ENCODE measurements at regions of chr15 and their contacts with region 1.

Region 1: DNA sequence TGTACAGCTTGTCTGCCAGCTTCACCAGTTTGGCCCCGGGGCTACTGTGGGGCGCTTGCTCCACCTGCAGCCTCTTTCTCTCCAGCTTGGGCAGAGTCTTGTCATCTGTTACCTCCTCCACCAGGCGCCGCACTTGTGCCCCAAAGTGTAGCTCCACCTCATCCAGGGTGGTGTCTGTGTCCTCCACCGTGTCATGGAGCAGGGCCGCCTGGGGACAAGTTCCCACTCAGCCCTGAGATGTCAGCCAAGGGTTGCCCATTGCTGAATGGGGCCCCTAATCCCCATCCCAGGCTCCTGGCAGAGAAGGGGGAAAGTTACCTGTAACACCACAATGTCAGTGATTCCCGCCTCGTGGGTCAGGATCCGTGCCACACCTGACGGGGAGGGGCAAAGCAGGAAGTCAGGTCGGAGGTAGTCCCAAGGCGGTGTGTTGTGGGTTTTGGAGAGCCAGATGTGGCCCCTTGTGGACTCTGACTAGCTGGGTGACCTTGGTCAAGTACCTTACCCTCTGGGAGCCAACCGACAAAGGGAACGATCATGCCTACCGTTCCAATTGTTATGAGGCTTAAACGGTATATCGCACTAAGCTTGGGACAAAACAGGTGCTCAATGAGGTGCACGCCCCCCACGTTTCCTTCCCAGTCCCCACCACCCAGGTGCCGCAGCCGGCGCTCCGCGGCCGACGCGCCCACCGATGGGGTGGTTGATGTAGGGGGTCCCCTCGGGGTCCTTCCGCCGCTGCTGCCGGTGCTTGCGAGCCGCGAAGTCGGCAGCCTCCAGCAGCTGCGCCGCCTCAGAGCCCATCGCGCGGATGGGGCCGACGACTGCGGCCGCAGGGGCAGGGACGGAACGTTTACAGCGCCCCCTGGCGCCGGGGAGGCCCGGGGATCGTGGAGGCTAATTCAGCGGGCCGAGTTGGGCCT is at the start of gene HDDC3:
- DNase-seq: peak; percentile 80 to 98 (median 88)
- ATAC-seq: peak; percentile 72
- H3K4me3 ChIP-seq: peak within 1 kb of the TSS; percentile 97
- H3K4me3 Mint-ChIP-seq: peak within 1 kb of the TSS; percentile 96 to 100 (median 98)
- H3K27ac ChIP-seq: peak within 1 kb of the TSS; percentile 79
- H3K27ac Mint-ChIP-seq: peak within 1 kb of the TSS; percentile 91 to 99 (median 98)
- H3K4me1 ChIP-seq: peaks cover 33 to 50% of the 10 kb centered on the region in 2 donors
- H3K4me1 Mint-ChIP-seq: peaks cover 36 to 63% (median 53%) of the 10 kb centered on the region in 7 donors
- H3K27me3 ChIP-seq: no peaks in the 10 kb centered on the region
- H3K27me3 Mint-ChIP-seq: no peaks in the 10 kb centered on the region
- total RNA-seq, gene HDDC3: 13.3 to 34.2 (median 29.0) TPM

Region 2: DNA sequence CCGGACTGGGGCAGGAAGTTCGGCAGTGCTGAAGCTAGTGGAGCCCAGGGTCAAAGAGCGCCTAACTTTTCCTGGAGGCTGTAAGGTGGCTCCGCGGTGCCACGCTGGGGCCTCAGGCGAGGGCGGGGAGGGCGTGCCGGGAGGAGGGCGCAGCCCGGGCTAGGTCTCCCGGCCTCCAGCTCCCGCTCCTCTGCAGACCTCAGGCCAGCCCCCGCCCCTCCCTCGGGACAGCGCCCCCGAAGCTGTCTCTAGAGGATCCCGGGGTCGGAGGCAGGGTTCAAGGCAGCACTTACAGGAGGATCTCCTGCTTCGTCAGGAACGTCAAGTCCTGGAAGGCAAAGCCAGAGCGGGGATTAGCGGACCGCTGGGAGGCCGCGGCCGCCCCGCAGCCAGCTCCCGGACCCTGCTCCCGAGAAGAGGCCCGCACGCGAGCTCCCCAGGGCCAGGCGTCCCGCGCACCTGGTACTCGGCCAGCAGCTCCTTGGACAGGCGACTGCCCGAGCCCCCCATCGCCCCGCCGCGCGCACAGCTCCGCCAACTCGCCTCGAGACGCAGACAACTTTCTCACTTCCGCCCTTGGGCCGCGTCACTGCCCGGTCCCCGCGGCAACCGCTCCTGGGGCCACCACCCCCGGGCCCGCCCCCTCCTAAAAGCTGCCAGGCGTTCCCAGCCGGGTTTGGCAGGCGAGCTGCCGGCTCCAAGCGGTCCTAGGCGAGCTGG is 698.5 kb before region 1 on chr15 and contains the start of gene CIB1:
- CTCF ChIA-PET with region 1: no interaction called
- POLR2A ChIA-PET with region 1: interaction called, 5 read pairs
- intact Hi-C with region 1: loop called (anchors 1 kb)
- DNase-seq: peak in 7 of 9 donors; percentile 91 to 97 (median 95)
- ATAC-seq: peak; percentile 89
- H3K4me3 ChIP-seq: peak within 1 kb of the TSS; percentile 92
- H3K4me3 Mint-ChIP-seq: peak within 1 kb of the TSS; percentile 87 to 95 (median 92)
- H3K27ac ChIP-seq: peak within 1 kb of the TSS; percentile 99
- H3K27ac Mint-ChIP-seq: peak within 1 kb of the TSS; percentile 96 to 100 (median 98)
- H3K4me1 ChIP-seq: peaks cover 39 to 43% of the 10 kb centered on the region in 2 donors
- H3K4me1 Mint-ChIP-seq: peaks cover 40 to 67% (median 57%) of the 10 kb centered on the region in 7 donors
- H3K27me3 ChIP-seq: no peaks in the 10 kb centered on the region
- H3K27me3 Mint-ChIP-seq: no peaks in the 10 kb centered on the region
- total RNA-seq, gene CIB1: 76.8 to 149 (median 127) TPM

Region 3: GRCh38 chr15:90648137-90649070 is 283.6 kb before region 1 on chr15:
- CTCF ChIA-PET with region 1: interaction called, 5 read pairs
- POLR2A ChIA-PET with region 1: no interaction called
- intact Hi-C with region 1: loop called (anchors 1 kb)
- DNase-seq: peak in 8 of 9 donors; percentile 48 to 69 (median 58)
- ATAC-seq: peak; percentile 83
- H3K4me3 ChIP-seq: no peak overlapping the region
- H3K4me3 Mint-ChIP-seq: peak overlapping the region; percentile 29 to 83 (median 68)
- H3K27ac ChIP-seq: no peak overlapping the region
- H3K27ac Mint-ChIP-seq: peak overlapping the region in 6 of 9 donors; percentile 31 to 95 (median 47)
- H3K4me1 ChIP-seq: peaks cover 9 to 15% of the 10 kb centered on the region in 2 donors
- H3K4me1 Mint-ChIP-seq: peaks cover 27 to 54% (median 37%) of the 10 kb centered on the region in 7 donors
- H3K27me3 ChIP-seq: no peaks in the 10 kb centered on the region
- H3K27me3 Mint-ChIP-seq: peaks cover 0 to 4% (median 0%) of the 10 kb centered on the region in 5 donors

Region 4: DNA sequence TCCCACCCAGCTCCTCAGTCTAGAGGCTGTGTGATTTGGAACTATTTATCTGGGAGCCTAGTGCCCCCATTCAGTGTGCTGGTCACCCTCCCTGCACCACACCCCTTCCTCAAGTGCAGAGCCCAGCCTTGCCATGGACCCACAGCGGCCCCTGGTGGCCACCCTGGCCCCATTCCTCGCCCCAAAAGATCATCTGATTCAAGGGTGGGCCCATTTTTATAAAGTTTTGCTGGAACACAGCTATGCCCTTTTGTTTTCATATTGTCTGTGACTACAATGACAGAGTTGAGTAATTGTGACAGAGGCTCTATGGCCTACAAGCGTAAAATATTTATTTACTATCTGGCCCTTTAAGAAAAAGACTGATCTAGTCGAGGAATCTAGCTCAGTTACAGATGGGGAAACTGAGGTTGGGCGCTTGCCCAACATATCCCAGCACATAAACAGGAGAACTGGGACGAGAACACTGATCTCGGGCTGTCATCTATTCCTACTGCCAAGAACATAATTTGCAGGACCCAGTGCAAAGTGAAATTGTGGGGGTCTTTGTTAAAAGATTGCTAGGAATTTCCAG is 45.9 kb before region 1 on chr15:
- CTCF ChIA-PET with region 1: interaction called, 14 read pairs
- POLR2A ChIA-PET with region 1: no interaction called
- intact Hi-C with region 1: no loop called
- DNase-seq: peak; percentile 49 to 85 (median 72)
- ATAC-seq: peak; percentile 79
- H3K4me3 ChIP-seq: no peak overlapping the region
- H3K4me3 Mint-ChIP-seq: peak overlapping the region in 2 of 10 donors; percentile 42 to 69
- H3K27ac ChIP-seq: no peak overlapping the region
- H3K27ac Mint-ChIP-seq: peak overlapping the region in 2 of 9 donors; percentile 59 to 87
- H3K4me1 ChIP-seq: peaks cover 6 to 7% of the 10 kb centered on the region in 2 donors
- H3K4me1 Mint-ChIP-seq: peaks cover 0 to 43% (median 11%) of the 10 kb centered on the region in 7 donors
- H3K27me3 ChIP-seq: no peaks in the 10 kb centered on the region
- H3K27me3 Mint-ChIP-seq: peaks cover 0 to 6% (median 4%) of the 10 kb centered on the region in 5 donors

Region 5: DNA sequence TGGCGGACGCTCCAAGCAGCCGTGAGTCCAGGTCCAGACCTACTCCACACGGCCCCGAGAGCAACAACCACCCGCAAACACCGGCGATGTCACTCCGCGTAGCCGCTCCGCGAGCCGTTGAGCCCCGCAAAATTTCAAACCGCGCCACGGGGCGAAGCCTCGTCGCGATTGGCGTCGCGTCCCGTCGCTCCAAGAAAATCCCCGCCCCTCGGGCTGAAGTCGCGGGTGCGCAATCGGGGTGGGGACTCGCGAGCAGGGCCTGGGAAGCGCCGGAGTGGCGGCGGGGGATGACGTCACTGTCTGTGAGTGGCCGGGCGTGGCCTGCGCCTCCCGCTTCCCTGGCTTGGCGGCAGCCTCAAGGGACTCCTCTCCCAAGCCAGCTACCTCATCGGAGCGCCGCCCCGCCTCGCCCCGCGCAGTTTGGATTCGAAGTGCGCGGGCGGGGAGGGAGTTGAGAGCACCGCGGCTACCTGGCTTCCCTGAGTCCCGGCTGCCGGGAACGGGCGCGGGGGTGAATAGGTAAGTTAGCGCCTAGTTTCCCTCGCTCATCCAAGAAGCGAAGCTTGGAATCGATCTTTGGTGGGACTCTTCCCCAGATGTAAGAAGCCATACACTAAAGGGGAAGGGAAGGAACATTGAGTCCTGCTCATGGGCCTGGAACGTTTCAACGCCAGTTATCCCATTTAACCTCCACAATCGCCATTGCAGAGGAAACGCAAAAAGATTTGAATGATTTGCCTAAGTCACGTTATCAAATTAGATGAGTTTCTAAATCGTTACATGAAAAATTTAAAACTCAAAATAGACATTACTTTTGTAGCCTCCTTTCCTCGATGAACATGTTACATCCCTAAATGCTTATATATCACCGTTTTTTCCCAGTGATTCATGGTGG is 62.7 kb after region 1 on chr15 and contains the start of gene PRC1:
- CTCF ChIA-PET with region 1: no interaction called
- POLR2A ChIA-PET with region 1: no interaction called
- intact Hi-C with region 1: loop called (anchors 1 kb)
- DNase-seq: peak; percentile 95 to 99 (median 95)
- ATAC-seq: peak; percentile 99
- H3K4me3 ChIP-seq: peak within 1 kb of the TSS; percentile 70
- H3K4me3 Mint-ChIP-seq: peak within 1 kb of the TSS; percentile 96 to 99 (median 98)
- H3K27ac ChIP-seq: peak within 1 kb of the TSS; percentile 86
- H3K27ac Mint-ChIP-seq: peak within 1 kb of the TSS; percentile 88 to 100 (median 97)
- H3K4me1 ChIP-seq: peaks cover 9 to 14% of the 10 kb centered on the region in 2 donors
- H3K4me1 Mint-ChIP-seq: peaks cover 3 to 43% (median 16%) of the 10 kb centered on the region in 7 donors
- H3K27me3 ChIP-seq: no peaks in the 10 kb centered on the region
- H3K27me3 Mint-ChIP-seq: no peaks in the 10 kb centered on the region
- total RNA-seq, gene PRC1: 2.6 to 98.9 (median 19.4) TPM

Region 6: GRCh38 chr15:91852741-91853510 is 920.9 kb after region 1 on chr15:
- CTCF ChIA-PET with region 1: interaction called, 3 read pairs
- POLR2A ChIA-PET with region 1: no interaction called
- intact Hi-C with region 1: loop called in 1 of 2 experiments (anchors 10 kb)
- DNase-seq: peak; percentile 60 to 86 (median 78)
- ATAC-seq: peak; percentile 79
- H3K4me3 ChIP-seq: peak overlapping the region; percentile 72
- H3K4me3 Mint-ChIP-seq: peak overlapping the region; percentile 79 to 90 (median 86)
- H3K27ac ChIP-seq: peak overlapping the region; percentile 76
- H3K27ac Mint-ChIP-seq: peak overlapping the region; percentile 79 to 96 (median 89)
- H3K4me1 ChIP-seq: peaks cover 46 to 59% of the 10 kb centered on the region in 2 donors
- H3K4me1 Mint-ChIP-seq: peaks cover 50 to 70% (median 60%) of the 10 kb centered on the region in 7 donors
- H3K27me3 ChIP-seq: no peaks in the 10 kb centered on the region
- H3K27me3 Mint-ChIP-seq: peaks cover 0 to 9% (median 0%) of the 10 kb centered on the region in 5 donors

Measured in naive thymus-derived CD4-positive, alpha-beta T cell (primary cell).